ENCODE measurements at regions of chr20 and their contacts with region 1.

Region 1: DNA sequence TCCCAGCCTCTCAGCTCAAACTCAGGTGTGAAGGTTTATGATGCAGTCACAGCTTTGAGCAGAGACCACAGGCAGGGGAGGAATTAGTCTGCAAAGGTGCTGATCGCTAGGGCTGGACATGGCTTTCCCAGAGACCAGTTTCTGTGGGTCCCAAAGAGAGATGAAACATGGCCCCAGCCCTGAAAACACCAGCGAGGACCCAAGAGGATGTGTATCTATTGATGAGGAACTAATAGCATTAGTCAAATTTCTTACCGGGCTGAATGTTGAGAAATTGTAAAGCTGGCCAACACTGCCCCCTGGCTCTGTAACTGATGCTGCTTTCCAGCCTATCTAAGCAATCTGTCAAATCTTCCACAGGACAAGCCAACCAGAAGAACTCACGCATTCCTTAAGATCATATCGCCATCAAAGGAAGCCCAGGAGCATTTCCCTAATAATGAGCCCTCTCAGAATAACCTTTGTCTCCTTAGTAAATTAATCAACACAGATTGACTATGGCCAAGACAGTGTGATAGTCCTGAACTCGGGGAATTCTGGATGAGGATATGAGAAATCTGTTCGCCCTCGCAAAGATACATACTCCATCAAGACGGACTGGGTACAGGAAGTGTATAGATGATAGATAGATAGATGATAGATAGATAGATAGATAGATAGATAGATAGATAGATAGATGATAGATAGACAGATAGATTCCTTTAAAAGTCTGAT is 7.8 kb upstream of the ACSS1 start:
- DNase-seq: peak; percentile 75
- ATAC-seq: peak; percentile 88

Region 2: GRCh38 chr20:25178563-25179438 is 113.0 kb after region 1 on chr20:
- intact Hi-C with region 1: loop called (anchors 5 kb)
- DNase-seq: no peak
- ATAC-seq: peak; percentile 94

Measured in Right ventricle myocardium superior (tissue), 1 donor.